GM10248 (cell line): ENCODE measurements at regions of chr2 and their contacts with region 1.

Region 1: DNA sequence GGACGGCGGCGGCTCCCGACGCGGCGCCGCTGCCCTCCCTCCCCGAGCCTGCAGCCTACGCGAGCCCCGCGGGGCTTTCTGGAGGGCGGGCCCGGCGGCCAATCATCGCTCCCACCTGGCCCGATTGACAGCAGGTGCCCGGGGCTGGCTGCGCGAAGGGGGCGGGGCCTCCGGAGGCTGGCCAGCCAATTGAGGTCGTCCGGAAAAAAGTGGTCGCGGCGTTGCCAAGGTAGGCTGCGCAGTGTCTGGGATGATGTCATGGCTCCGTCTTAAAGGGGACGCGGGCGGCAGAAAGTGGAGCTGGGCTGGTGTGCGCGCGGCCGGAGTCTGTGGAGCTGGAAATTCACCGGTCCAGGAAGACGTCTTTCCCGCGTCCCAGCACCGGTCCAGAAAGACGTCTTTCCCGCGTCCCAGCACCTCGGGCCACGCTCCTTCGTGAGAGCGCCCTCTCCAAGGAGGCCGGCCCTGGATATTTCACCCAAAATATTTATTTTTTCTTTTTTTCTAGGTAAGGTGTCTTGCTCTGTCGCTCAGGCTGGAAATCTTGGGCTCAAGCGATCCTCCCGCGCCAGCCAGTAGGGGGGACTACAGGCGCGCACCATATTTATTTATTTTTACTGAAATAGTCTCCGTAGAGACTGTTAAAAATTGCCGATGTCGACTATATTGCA is at the start of gene ACTR1B:
- DNase-seq: peak; percentile 98
- CTCF ChIP-seq: peak; percentile 63

Region 2: DNA sequence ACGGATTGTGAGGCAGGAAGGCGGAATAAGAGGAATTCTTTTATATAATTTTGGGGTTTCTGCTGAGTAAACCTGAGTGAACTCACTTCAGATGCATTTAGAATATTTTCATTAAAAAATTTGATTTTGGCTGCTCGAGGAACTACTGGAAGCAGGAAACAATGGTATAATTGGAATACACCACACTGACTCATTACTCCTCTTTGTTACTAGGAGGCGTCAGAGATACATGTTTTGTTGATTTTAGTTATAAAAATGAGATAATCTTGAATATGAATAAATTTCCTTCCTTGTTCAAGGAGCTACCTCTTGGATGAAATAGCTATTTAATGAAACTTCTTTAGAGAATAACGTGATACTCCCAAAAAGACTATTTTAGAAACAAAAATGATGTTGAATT is 453.8 kb before region 1 on chr2:
- CTCF ChIA-PET with region 1: no interaction called
- POLR2A ChIA-PET with region 1: no interaction called
- DNase-seq: no peak
- CTCF ChIP-seq: no peak

Region 3: DNA sequence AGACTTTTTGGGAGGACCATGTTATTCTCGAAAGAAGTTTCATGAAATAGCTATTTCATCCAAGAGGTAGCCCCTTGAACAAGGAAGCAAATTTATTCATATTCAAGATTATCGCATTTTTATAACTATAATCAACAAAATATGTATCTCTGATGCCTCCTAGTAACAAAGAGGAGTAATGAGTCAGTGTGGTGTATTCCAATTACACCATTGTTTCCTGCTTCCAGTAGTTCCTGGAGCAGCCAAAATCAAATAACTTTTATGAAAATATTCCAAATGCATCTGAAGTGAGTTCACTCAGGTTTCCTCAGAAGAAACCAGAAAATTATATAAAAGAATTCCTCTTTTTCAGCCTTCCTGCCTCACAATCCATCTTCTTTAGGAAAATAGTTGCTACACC is 117.4 kb before region 1 on chr2:
- CTCF ChIA-PET with region 1: no interaction called
- POLR2A ChIA-PET with region 1: no interaction called
- DNase-seq: no peak
- CTCF ChIP-seq: no peak

Region 4: DNA sequence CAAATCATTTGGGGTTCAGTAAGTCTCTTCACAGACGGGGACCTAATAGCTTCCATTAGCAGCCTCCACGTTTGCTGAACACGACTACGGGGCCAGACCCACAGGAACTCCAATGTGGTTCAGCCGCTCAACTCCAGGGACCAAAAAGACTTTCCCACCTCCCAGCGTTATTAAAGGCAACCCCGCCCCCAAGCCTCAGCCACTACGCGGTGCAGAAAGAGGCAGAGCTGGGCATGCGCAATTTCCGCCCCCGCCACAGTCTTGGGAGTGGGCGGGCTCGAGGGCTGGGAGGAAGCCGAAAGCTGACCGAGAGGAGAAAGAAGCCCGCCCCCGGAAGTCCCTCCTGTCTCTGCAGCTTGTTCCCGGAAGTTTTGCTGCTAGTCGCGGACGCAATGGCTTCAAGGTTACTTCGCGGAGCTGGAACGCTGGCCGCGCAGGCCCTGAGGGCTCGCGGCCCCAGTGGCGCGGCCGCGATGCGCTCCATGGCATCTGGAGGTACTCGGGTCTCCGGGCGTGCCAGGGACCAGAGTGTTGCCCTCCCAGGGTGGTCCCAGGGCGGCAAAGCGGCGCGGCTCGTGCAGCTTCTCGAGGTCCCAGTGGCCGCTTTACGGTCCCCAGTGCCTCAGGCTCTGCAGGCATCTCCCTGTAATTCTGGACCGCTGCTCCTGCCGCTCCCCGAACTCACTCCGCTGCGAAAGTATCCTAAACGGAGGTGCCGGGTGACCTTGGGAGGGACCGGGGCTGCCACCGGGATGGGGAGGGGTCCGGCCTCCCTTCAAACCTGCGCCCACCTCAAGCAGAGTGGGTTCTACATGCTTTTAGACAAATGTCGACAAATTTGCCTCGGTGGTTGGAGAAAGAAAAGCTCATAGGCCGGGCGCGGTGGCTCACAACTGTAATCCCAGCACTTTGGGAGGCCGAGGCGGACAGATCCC is 18.1 kb before region 1 on chr2 and contains the start of gene COX5B:
- CTCF ChIA-PET with region 1: interaction called, 54 read pairs
- POLR2A ChIA-PET with region 1: interaction called, 29 read pairs
- DNase-seq: peak; percentile 99
- CTCF ChIP-seq: no peak

Region 5: DNA sequence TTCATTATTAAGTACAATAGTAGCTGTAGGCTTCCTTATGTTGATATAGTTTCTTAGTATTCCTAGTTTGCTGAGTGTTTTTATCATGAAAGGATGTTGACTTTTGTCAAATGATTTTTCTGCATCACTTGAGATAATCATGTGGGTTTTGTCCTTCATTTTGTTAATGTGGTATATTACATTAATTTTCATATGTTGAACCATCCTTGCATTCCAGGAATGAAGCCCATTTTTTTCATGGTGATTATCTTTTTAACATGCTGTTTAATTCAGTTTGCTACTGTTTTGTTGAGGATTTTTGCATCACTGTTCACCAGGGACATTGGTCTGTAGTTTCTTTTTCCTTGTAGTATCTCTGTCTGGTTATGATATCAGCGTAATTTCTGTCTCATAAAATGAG is 599.3 kb after region 1 on chr2:
- CTCF ChIA-PET with region 1: no interaction called
- POLR2A ChIA-PET with region 1: no interaction called
- DNase-seq: no peak
- CTCF ChIP-seq: no peak